ENCODE measurements at regions of chr1 and their contacts with region 1.

Region 1: DNA sequence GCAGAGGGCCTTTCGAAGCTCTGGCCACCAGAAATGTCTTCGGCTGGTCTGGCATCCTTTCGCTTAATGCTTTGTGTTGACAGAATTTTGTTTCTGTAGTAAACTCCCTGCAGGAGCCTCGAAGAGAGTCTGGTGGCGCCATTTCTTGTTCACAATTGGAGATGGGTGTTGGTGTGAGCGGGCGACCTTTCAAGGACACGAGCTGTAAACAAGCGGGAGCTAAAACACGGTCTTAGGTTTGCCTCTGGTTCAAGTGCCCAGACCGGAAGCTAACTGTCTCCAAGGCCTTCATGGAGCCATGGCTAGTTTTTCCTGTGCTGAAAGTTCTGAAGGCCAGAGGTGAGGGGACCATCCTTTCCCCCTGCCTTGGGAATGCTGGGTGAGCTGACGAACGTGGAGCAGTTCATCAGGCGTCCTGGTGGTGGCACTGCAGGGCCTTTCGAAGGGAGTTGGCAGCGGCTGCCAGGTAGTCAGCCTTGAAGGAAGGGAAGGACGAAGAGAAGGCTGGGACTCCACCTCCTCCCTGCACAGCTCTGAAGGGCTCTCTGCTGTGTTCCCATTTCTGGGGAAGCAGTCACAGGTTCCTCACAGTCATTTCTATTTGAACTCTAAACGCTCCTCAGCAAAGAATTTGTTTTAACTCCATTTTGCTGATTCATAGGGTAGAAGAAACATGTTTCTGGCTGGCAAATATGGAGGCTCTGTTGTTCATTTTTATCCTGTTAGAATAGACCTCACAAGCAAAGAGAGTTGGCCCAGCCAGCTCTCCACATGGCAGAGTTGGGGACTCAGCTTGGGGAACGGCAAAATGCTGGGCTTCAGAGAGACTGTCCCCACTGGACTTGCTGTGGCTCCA is 35.2 kb downstream of the URB2 start:
- DNase-seq: peak; percentile 53 to 82 (median 70)
- ATAC-seq: peak; percentile 83
- H3K4me3 ChIP-seq: no peak overlapping the region
- H3K4me3 Mint-ChIP-seq: no peak overlapping the region
- H3K27ac ChIP-seq: no peak overlapping the region
- H3K27ac Mint-ChIP-seq: no peak overlapping the region
- H3K4me1 ChIP-seq: peaks cover 13% of the 10 kb centered on the region
- H3K4me1 Mint-ChIP-seq: peaks cover 4% of the 10 kb centered on the region
- H3K27me3 ChIP-seq: no peaks in the 10 kb centered on the region
- H3K27me3 Mint-ChIP-seq: no peaks in the 10 kb centered on the region
- CTCF ChIP-seq: peak; percentile 75

Region 2: GRCh38 chr1:229650045-229650444 is 11.2 kb before region 1 on chr1:
- CTCF ChIA-PET with region 1: interaction called, 22 read pairs
- POLR2A ChIA-PET with region 1: interaction called, 3 read pairs
- intact Hi-C with region 1: no loop called
- DNase-seq: no peak
- ATAC-seq: no peak
- H3K4me3 ChIP-seq: no peak overlapping the region
- H3K4me3 Mint-ChIP-seq: no peak overlapping the region
- H3K27ac ChIP-seq: no peak overlapping the region
- H3K27ac Mint-ChIP-seq: no peak overlapping the region
- H3K4me1 ChIP-seq: no peaks in the 10 kb centered on the region
- H3K4me1 Mint-ChIP-seq: no peaks in the 10 kb centered on the region
- H3K27me3 ChIP-seq: no peaks in the 10 kb centered on the region
- H3K27me3 Mint-ChIP-seq: no peaks in the 10 kb centered on the region
- CTCF ChIP-seq: no peak

Region 3: DNA sequence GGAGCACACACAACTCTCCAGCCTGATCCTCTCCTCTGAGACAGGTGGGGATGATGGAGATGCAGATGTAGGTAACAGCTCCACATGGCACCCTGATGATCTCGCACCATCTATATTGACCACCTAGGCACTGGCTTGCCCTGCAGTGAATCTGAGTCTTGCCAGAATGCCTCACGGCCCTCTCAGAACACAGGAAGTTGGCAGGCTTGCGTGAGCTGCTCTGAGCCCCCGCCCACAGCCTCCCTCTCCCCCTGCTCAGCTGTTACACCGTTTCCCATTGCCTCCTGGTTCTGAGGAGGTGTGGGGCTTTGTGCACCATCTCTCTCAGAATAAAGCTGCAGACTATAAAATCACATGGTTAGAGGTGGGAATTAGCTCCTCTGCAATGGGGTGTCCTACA is 12.8 kb after region 1 on chr1:
- CTCF ChIA-PET with region 1: interaction called, 23 read pairs
- POLR2A ChIA-PET with region 1: no interaction called
- intact Hi-C with region 1: no loop called
- DNase-seq: peak in 1 of 9 experiments; percentile 14
- ATAC-seq: no peak
- H3K4me3 ChIP-seq: no peak overlapping the region
- H3K4me3 Mint-ChIP-seq: no peak overlapping the region
- H3K27ac ChIP-seq: no peak overlapping the region
- H3K27ac Mint-ChIP-seq: no peak overlapping the region
- H3K4me1 ChIP-seq: peaks cover 7% of the 10 kb centered on the region
- H3K4me1 Mint-ChIP-seq: peaks cover 14% of the 10 kb centered on the region
- H3K27me3 ChIP-seq: peaks cover 0 to 3% of the 10 kb centered on the region in 2 experiments
- H3K27me3 Mint-ChIP-seq: no peaks in the 10 kb centered on the region
- CTCF ChIP-seq: no peak

Region 4: DNA sequence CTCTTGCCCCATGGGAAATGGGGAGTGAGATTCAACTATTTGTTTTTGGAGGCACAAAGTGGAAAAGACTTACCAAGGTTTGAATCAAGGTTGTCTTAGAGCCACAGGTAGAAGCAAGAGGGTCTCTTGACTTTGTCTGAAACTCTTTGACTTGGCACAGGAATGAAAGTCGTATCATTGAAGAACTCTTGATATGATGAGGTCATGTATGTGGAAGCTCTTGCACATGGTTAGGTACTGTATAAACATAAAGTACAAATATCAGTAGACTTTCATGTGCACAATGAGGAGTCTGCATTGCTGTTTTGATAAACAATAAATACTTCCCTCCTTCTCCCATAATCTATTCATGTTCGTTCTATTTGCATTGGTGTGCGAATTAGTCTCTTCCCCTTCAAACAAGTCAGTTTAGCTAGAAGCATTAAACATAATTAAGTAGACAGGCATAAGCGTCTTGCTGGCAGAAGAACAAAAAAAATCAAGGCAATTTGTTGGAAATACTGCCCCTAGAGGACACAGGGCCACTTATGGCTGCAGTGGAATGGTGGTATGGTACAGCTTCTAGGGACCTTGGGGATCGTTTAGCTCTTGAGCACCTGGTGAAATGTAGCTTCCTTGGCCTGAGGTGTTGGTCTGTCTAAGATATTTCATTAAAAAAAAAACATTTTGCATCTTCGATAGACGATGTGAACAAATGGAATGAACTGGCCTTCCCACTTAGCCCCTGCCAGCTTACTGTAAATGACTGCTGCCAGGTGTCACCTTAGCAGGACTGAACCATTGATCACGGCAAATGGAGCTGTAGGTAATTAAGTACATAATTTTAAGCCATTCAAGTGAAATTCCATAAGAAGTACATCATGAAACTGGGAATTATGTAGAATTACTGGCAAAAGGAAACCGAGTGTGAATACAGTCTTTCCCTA is 187.8 kb after region 1 on chr1:
- CTCF ChIA-PET with region 1: interaction called, 3 read pairs
- POLR2A ChIA-PET with region 1: no interaction called
- intact Hi-C with region 1: loop called in 1 of 2 experiments (anchors 5 kb)
- DNase-seq: peak in 2 of 9 experiments; percentile 6 to 19
- ATAC-seq: no peak
- H3K4me3 ChIP-seq: no peak overlapping the region
- H3K4me3 Mint-ChIP-seq: no peak overlapping the region
- H3K27ac ChIP-seq: no peak overlapping the region
- H3K27ac Mint-ChIP-seq: no peak overlapping the region
- H3K4me1 ChIP-seq: no peaks in the 10 kb centered on the region
- H3K4me1 Mint-ChIP-seq: no peaks in the 10 kb centered on the region
- H3K27me3 ChIP-seq: peaks cover 0 to 3% of the 10 kb centered on the region in 2 experiments
- H3K27me3 Mint-ChIP-seq: peaks cover 4% of the 10 kb centered on the region
- CTCF ChIP-seq: no peak

Region 5: GRCh38 chr1:229979993-229980392 is 318.7 kb after region 1 on chr1:
- CTCF ChIA-PET with region 1: no interaction called
- POLR2A ChIA-PET with region 1: no interaction called
- intact Hi-C with region 1: no loop called
- DNase-seq: no peak
- ATAC-seq: no peak
- H3K4me3 ChIP-seq: no peak overlapping the region
- H3K4me3 Mint-ChIP-seq: no peak overlapping the region
- H3K27ac ChIP-seq: no peak overlapping the region
- H3K27ac Mint-ChIP-seq: no peak overlapping the region
- H3K4me1 ChIP-seq: no peaks in the 10 kb centered on the region
- H3K4me1 Mint-ChIP-seq: no peaks in the 10 kb centered on the region
- H3K27me3 ChIP-seq: no peaks in the 10 kb centered on the region
- H3K27me3 Mint-ChIP-seq: peaks cover 11% of the 10 kb centered on the region
- CTCF ChIP-seq: no peak

Region 6: DNA sequence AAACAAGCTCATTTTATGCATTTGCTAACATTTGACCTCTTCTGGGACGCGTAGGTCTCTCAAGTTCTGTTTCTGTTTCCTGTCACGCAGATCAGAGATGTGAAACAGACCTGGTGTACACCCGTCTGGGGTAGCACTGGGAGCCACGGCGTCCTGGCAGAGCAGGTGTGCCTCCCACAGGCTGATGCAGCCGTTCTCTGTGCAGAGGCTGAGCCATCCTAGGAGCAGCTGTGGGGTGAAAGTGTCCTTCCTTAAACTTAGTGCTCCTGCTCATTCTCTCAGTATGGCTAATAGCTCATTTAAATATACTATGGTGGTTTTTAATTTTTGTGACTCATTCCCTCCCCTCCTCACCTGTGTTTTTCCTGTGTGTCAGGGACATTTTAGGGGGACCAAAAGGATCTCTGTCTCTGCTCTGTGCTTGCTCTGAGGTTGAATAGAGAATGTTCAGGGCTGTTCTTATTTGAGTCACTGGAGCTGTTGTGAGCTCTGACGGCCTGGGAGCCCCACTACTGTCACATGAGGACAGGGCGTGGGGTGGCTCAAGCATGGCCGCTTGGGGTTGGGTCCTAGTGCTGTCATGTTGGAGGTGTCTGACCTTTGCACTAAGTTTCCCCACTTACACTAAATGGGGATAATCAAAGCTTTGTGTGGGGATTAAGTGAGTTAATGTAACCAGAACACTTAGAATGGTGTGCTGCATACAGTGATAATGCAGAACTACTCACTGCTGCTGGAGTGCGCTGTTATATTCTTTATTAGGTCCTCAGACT is 448.8 kb after region 1 on chr1:
- CTCF ChIA-PET with region 1: interaction called, 4 read pairs
- POLR2A ChIA-PET with region 1: interaction called, 4 read pairs
- intact Hi-C with region 1: loop called in 1 of 2 experiments (anchors 1 kb)
- DNase-seq: peak in 7 of 9 experiments; percentile 29 to 66 (median 49)
- ATAC-seq: peak; percentile 89
- H3K4me3 ChIP-seq: no peak overlapping the region
- H3K4me3 Mint-ChIP-seq: no peak overlapping the region
- H3K27ac ChIP-seq: no peak overlapping the region
- H3K27ac Mint-ChIP-seq: peak overlapping the region; percentile 46
- H3K4me1 ChIP-seq: peaks cover 13% of the 10 kb centered on the region
- H3K4me1 Mint-ChIP-seq: peaks cover 58% of the 10 kb centered on the region
- H3K27me3 ChIP-seq: no peaks in the 10 kb centered on the region
- H3K27me3 Mint-ChIP-seq: no peaks in the 10 kb centered on the region
- CTCF ChIP-seq: peak; percentile 20

Region 7: GRCh38 chr1:230167419-230167852 is 506.2 kb after region 1 on chr1:
- CTCF ChIA-PET with region 1: interaction called, 31 read pairs
- POLR2A ChIA-PET with region 1: no interaction called
- intact Hi-C with region 1: loop called (anchors 1 kb)
- DNase-seq: peak in 8 of 9 experiments; percentile 21 to 73 (median 39)
- ATAC-seq: peak; percentile 82
- H3K4me3 ChIP-seq: no peak overlapping the region
- H3K4me3 Mint-ChIP-seq: no peak overlapping the region
- H3K27ac ChIP-seq: no peak overlapping the region
- H3K27ac Mint-ChIP-seq: no peak overlapping the region
- H3K4me1 ChIP-seq: no peaks in the 10 kb centered on the region
- H3K4me1 Mint-ChIP-seq: peaks cover 29% of the 10 kb centered on the region
- H3K27me3 ChIP-seq: no peaks in the 10 kb centered on the region
- H3K27me3 Mint-ChIP-seq: no peaks in the 10 kb centered on the region
- CTCF ChIP-seq: peak; percentile 84

Region 8: GRCh38 chr1:230310381-230311163 is 649.3 kb after region 1 on chr1:
- CTCF ChIA-PET with region 1: interaction called, 51 read pairs
- POLR2A ChIA-PET with region 1: no interaction called
- intact Hi-C with region 1: loop called in 1 of 2 experiments (anchors 1 kb)
- DNase-seq: peak; percentile 22 to 83 (median 63)
- ATAC-seq: no peak
- H3K4me3 ChIP-seq: no peak overlapping the region
- H3K4me3 Mint-ChIP-seq: no peak overlapping the region
- H3K27ac ChIP-seq: no peak overlapping the region
- H3K27ac Mint-ChIP-seq: no peak overlapping the region
- H3K4me1 ChIP-seq: no peaks in the 10 kb centered on the region
- H3K4me1 Mint-ChIP-seq: peaks cover 5% of the 10 kb centered on the region
- H3K27me3 ChIP-seq: no peaks in the 10 kb centered on the region
- H3K27me3 Mint-ChIP-seq: peaks cover 2% of the 10 kb centered on the region
- CTCF ChIP-seq: peak; percentile 98